CD8-positive, alpha-beta T cell (primary cell): ENCODE measurements at regions of chr9 and their contacts with region 1.

Region 1: GRCh38 chr9:33290247-33291030 is at the start of gene NFX1:
- DNase-seq: peak; percentile 97 to 100 (median 99)
- ATAC-seq: peak; percentile 76
- H3K4me3 ChIP-seq: peak within 1 kb of the TSS; percentile 57 to 73
- H3K4me3 Mint-ChIP-seq: peak within 1 kb of the TSS; percentile 88
- H3K27ac ChIP-seq: peak within 1 kb of the TSS; percentile 96 to 98
- H3K27ac Mint-ChIP-seq: peak within 1 kb of the TSS; percentile 100
- H3K4me1 ChIP-seq: peaks cover 62% of the 10 kb centered on the region
- H3K4me1 Mint-ChIP-seq: peaks cover 66% of the 10 kb centered on the region
- H3K27me3 ChIP-seq: no peaks in the 10 kb centered on the region
- H3K27me3 Mint-ChIP-seq: no peaks in the 10 kb centered on the region
- CTCF ChIP-seq: no peak
- total RNA-seq, gene NFX1: 32.9 to 37.9 TPM

Region 2: DNA sequence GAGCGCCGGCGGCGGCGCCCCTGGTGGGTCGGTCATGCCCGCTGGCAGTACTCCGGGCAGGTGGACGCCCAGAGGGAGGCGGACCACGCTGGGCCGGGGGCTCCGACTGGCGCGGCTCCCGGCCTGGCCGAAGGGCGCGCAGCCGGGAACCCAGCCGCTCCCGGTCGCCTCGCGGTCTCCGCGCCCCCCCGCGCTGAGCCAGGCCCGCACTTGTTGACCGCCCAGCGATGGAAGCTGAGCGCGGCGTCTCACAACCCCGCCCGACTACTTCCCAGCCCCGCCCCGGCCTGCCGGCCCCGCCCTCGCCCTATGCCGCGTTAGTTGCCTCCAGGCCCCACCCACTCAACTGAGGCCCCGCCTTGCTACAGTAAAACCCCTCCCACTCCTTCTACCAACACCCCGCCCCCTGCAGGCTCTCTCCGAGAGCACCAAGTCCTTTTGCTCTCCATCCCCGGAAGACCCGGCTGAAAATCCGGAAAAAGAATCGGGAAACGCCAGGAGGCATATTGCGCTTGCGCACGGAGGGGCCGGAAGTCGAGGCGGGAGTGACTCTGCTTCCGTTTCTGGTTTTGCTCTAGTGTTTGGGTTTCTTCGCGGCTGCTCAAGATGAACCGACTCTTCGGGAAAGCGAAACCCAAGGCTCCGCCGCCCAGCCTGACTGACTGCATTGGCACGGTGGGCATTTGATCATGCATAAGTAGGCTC is 25.8 kb before region 1 on chr9 and contains the starts of genes BAG1 and CHMP5:
- CTCF ChIA-PET with region 1: interaction called, 3 read pairs
- POLR2A ChIA-PET with region 1: interaction called, 30 read pairs
- intact Hi-C with region 1: loop called (anchors 1 kb)
- DNase-seq: peak; percentile 99 to 100 (median 100)
- ATAC-seq: peak; percentile 97
- H3K4me3 ChIP-seq: peak within 1 kb of the TSS; percentile 69 to 98
- H3K4me3 Mint-ChIP-seq: peak within 1 kb of the TSS; percentile 96
- H3K27ac ChIP-seq: peak within 1 kb of the TSS; percentile 74 to 94
- H3K27ac Mint-ChIP-seq: peak within 1 kb of the TSS; percentile 97
- H3K4me1 ChIP-seq: peaks cover 21% of the 10 kb centered on the region
- H3K4me1 Mint-ChIP-seq: peaks cover 62% of the 10 kb centered on the region
- H3K27me3 ChIP-seq: no peaks in the 10 kb centered on the region
- H3K27me3 Mint-ChIP-seq: no peaks in the 10 kb centered on the region
- CTCF ChIP-seq: no peak
- total RNA-seq, gene BAG1: 56.8 to 64.3 TPM
- total RNA-seq, gene CHMP5: 13.4 to 14.2 TPM

Region 3: GRCh38 chr9:33320568-33321261 is 30.3 kb after region 1 on chr9:
- CTCF ChIA-PET with region 1: interaction called, 4 read pairs
- POLR2A ChIA-PET with region 1: interaction called, 3 read pairs
- intact Hi-C with region 1: loop called in 1 of 2 experiments (anchors 1 kb)
- DNase-seq: no peak
- ATAC-seq: no peak
- H3K4me3 ChIP-seq: no peak overlapping the region
- H3K4me3 Mint-ChIP-seq: no peak overlapping the region
- H3K27ac ChIP-seq: no peak overlapping the region
- H3K27ac Mint-ChIP-seq: peak overlapping the region; percentile 27
- H3K4me1 ChIP-seq: no peaks in the 10 kb centered on the region
- H3K4me1 Mint-ChIP-seq: no peaks in the 10 kb centered on the region
- H3K27me3 ChIP-seq: no peaks in the 10 kb centered on the region
- H3K27me3 Mint-ChIP-seq: no peaks in the 10 kb centered on the region
- CTCF ChIP-seq: no peak

Region 4: GRCh38 chr9:33446946-33447798 is 156.7 kb after region 1 on chr9 and contains the start of gene AQP3:
- CTCF ChIA-PET with region 1: interaction called, 3 read pairs
- POLR2A ChIA-PET with region 1: interaction called, 10 read pairs
- intact Hi-C with region 1: loop called in 1 of 2 experiments (anchors 10 kb)
- DNase-seq: peak; percentile 49 to 88 (median 76)
- ATAC-seq: peak; percentile 53
- H3K4me3 ChIP-seq: peak within 1 kb of the TSS; percentile 58 to 79
- H3K4me3 Mint-ChIP-seq: peak within 1 kb of the TSS; percentile 95
- H3K27ac ChIP-seq: peak within 1 kb of the TSS; percentile 62 to 81
- H3K27ac Mint-ChIP-seq: peak within 1 kb of the TSS; percentile 96
- H3K4me1 ChIP-seq: peaks cover 39% of the 10 kb centered on the region
- H3K4me1 Mint-ChIP-seq: peaks cover 52% of the 10 kb centered on the region
- H3K27me3 ChIP-seq: no peaks in the 10 kb centered on the region
- H3K27me3 Mint-ChIP-seq: no peaks in the 10 kb centered on the region
- CTCF ChIP-seq: no peak
- total RNA-seq, gene AQP3: 48.0 to 50.3 TPM

Region 5: GRCh38 chr9:33721674-33722358 is 431.4 kb after region 1 on chr9:
- CTCF ChIA-PET with region 1: no interaction called
- POLR2A ChIA-PET with region 1: no interaction called
- intact Hi-C with region 1: loop called in 1 of 2 experiments (anchors 5 kb)
- DNase-seq: peak; percentile 75 to 94 (median 87)
- ATAC-seq: peak; percentile 87
- H3K4me3 ChIP-seq: no peak overlapping the region
- H3K4me3 Mint-ChIP-seq: no peak overlapping the region
- H3K27ac ChIP-seq: no peak overlapping the region
- H3K27ac Mint-ChIP-seq: no peak overlapping the region
- H3K4me1 ChIP-seq: no peaks in the 10 kb centered on the region
- H3K4me1 Mint-ChIP-seq: no peaks in the 10 kb centered on the region
- H3K27me3 ChIP-seq: no peaks in the 10 kb centered on the region
- H3K27me3 Mint-ChIP-seq: peaks cover 15% of the 10 kb centered on the region
- CTCF ChIP-seq: peak; percentile 100